ENCODE measurements at regions of chr9 and their contacts with region 1.

Region 1: GRCh38 chr9:129835021-129835871 is at the starts of genes C9orf78 and USP20:
- DNase-seq: peak; percentile 95 to 98 (median 98)
- H3K4me3 ChIP-seq: peak within 1 kb of the TSS; percentile 76 to 98
- H3K4me3 Mint-ChIP-seq: peak within 1 kb of the TSS; percentile 96 to 99 (median 98)
- H3K27ac ChIP-seq: peak within 1 kb of the TSS; percentile 92
- H3K27ac Mint-ChIP-seq: peak within 1 kb of the TSS; percentile 97 to 99 (median 99)
- H3K4me1 ChIP-seq: peaks cover 59% of the 10 kb centered on the region
- H3K4me1 Mint-ChIP-seq: peaks cover 40 to 69% (median 56%) of the 10 kb centered on the region in 4 donors
- H3K27me3 ChIP-seq: no peaks in the 10 kb centered on the region
- H3K27me3 Mint-ChIP-seq: no peaks in the 10 kb centered on the region
- total RNA-seq, gene C9orf78: 95.5 to 96.9 TPM
- total RNA-seq, gene USP20: 123 to 132 TPM

Region 2: DNA sequence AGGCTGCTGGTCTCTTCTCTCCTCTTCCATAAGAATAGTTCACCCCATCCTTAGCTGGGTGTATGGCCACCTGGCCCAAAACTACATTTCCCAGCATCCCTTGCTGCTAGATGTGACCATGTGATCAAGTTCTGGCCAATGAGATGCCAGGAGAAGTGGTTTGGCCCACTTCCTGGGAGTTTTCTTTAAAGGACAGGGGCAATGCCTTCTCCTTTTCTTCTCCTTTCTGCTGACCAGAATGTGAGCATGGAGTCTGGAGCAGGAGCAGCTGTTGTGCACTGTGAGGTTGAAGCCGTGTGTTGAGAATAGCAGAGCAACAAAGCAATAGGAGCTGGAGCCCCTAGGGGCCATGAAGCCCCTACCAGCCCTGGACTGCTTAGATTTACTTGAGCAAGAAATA is 251.1 kb before region 1 on chr9:
- CTCF ChIA-PET with region 1: no interaction called
- POLR2A ChIA-PET with region 1: no interaction called
- intact Hi-C with region 1: no loop called
- DNase-seq: peak; percentile 59 to 67 (median 62)
- H3K4me3 ChIP-seq: no peak overlapping the region
- H3K4me3 Mint-ChIP-seq: peak overlapping the region in 5 of 8 donors; percentile 19 to 70 (median 32)
- H3K27ac ChIP-seq: no peak overlapping the region
- H3K27ac Mint-ChIP-seq: peak overlapping the region; percentile 20 to 92 (median 83)
- H3K4me1 ChIP-seq: peaks cover 52% of the 10 kb centered on the region
- H3K4me1 Mint-ChIP-seq: peaks cover 26 to 77% (median 52%) of the 10 kb centered on the region in 4 donors
- H3K27me3 ChIP-seq: no peaks in the 10 kb centered on the region
- H3K27me3 Mint-ChIP-seq: no peaks in the 10 kb centered on the region

Region 3: GRCh38 chr9:129802851-129803675 is 32.2 kb before region 1 on chr9 and contains the start of gene TOR1B:
- CTCF ChIA-PET with region 1: interaction called, 5 read pairs
- POLR2A ChIA-PET with region 1: interaction called, 9 read pairs
- intact Hi-C with region 1: loop called (anchors 1 kb)
- DNase-seq: peak; percentile 93 to 96 (median 94)
- H3K4me3 ChIP-seq: peak within 1 kb of the TSS; percentile 77 to 78
- H3K4me3 Mint-ChIP-seq: peak within 1 kb of the TSS; percentile 91 to 96 (median 93)
- H3K27ac ChIP-seq: peak within 1 kb of the TSS; percentile 85
- H3K27ac Mint-ChIP-seq: peak within 1 kb of the TSS; percentile 88 to 97 (median 95)
- H3K4me1 ChIP-seq: peaks cover 27% of the 10 kb centered on the region
- H3K4me1 Mint-ChIP-seq: peaks cover 17 to 31% (median 23%) of the 10 kb centered on the region in 4 donors
- H3K27me3 ChIP-seq: no peaks in the 10 kb centered on the region
- H3K27me3 Mint-ChIP-seq: no peaks in the 10 kb centered on the region
- total RNA-seq, gene TOR1B: 29.5 to 33.0 TPM

Region 4: GRCh38 chr9:129823935-129824601 is 11.2 kb before region 1 on chr9 and contains the start of gene TOR1A:
- CTCF ChIA-PET with region 1: no interaction called
- POLR2A ChIA-PET with region 1: interaction called, 40 read pairs
- intact Hi-C with region 1: loop called (anchors 1 kb)
- DNase-seq: peak; percentile 89 to 95 (median 90)
- H3K4me3 ChIP-seq: peak within 1 kb of the TSS; percentile 24 to 73
- H3K4me3 Mint-ChIP-seq: peak within 1 kb of the TSS; percentile 84 to 91 (median 88)
- H3K27ac ChIP-seq: peak within 1 kb of the TSS; percentile 62
- H3K27ac Mint-ChIP-seq: peak within 1 kb of the TSS; percentile 73 to 95 (median 88)
- H3K4me1 ChIP-seq: peaks cover 8% of the 10 kb centered on the region
- H3K4me1 Mint-ChIP-seq: peaks cover 8 to 18% (median 13%) of the 10 kb centered on the region in 4 donors
- H3K27me3 ChIP-seq: no peaks in the 10 kb centered on the region
- H3K27me3 Mint-ChIP-seq: no peaks in the 10 kb centered on the region
- total RNA-seq, gene TOR1A: 39.8 to 41.9 TPM

Region 5: GRCh38 chr9:129863059-129863690 is 27.9 kb after region 1 on chr9:
- CTCF ChIA-PET with region 1: interaction called, 3 read pairs
- POLR2A ChIA-PET with region 1: interaction called, 181 read pairs
- intact Hi-C with region 1: no loop called
- DNase-seq: peak; percentile 57 to 87 (median 73)
- H3K4me3 ChIP-seq: peak overlapping the region in 1 of 2 donors; percentile 29
- H3K4me3 Mint-ChIP-seq: peak overlapping the region; percentile 34 to 88 (median 77)
- H3K27ac ChIP-seq: peak overlapping the region; percentile 43
- H3K27ac Mint-ChIP-seq: peak overlapping the region; percentile 85 to 98 (median 93)
- H3K4me1 ChIP-seq: peaks cover 83% of the 10 kb centered on the region
- H3K4me1 Mint-ChIP-seq: peaks cover 42 to 79% (median 64%) of the 10 kb centered on the region in 4 donors
- H3K27me3 ChIP-seq: no peaks in the 10 kb centered on the region
- H3K27me3 Mint-ChIP-seq: no peaks in the 10 kb centered on the region

Region 6: GRCh38 chr9:129868916-129869486 is 33.8 kb after region 1 on chr9:
- CTCF ChIA-PET with region 1: interaction called, 5 read pairs
- POLR2A ChIA-PET with region 1: interaction called, 181 read pairs
- intact Hi-C with region 1: loop called (anchors 1 kb)
- DNase-seq: peak; percentile 94 to 98 (median 96)
- H3K4me3 ChIP-seq: peak overlapping the region; percentile 12 to 51
- H3K4me3 Mint-ChIP-seq: peak overlapping the region; percentile 59 to 78 (median 69)
- H3K27ac ChIP-seq: peak overlapping the region; percentile 90
- H3K27ac Mint-ChIP-seq: peak overlapping the region; percentile 86 to 98 (median 94)
- H3K4me1 ChIP-seq: peaks cover 89% of the 10 kb centered on the region
- H3K4me1 Mint-ChIP-seq: peaks cover 46 to 93% (median 73%) of the 10 kb centered on the region in 4 donors
- H3K27me3 ChIP-seq: no peaks in the 10 kb centered on the region
- H3K27me3 Mint-ChIP-seq: no peaks in the 10 kb centered on the region

Region 7: GRCh38 chr9:129906298-129906697 is 71.1 kb after region 1 on chr9:
- CTCF ChIA-PET with region 1: no interaction called
- POLR2A ChIA-PET with region 1: no interaction called
- intact Hi-C with region 1: no loop called
- DNase-seq: no peak
- H3K4me3 ChIP-seq: no peak overlapping the region
- H3K4me3 Mint-ChIP-seq: no peak overlapping the region
- H3K27ac ChIP-seq: no peak overlapping the region
- H3K27ac Mint-ChIP-seq: peak overlapping the region in 4 of 7 donors; percentile 20 to 72 (median 46)
- H3K4me1 ChIP-seq: no peaks in the 10 kb centered on the region
- H3K4me1 Mint-ChIP-seq: peaks cover 17 to 36% (median 23%) of the 10 kb centered on the region in 4 donors
- H3K27me3 ChIP-seq: no peaks in the 10 kb centered on the region
- H3K27me3 Mint-ChIP-seq: no peaks in the 10 kb centered on the region

Region 8: GRCh38 chr9:130053504-130054324 is 218.5 kb after region 1 on chr9 and contains the start of gene GPR107:
- CTCF ChIA-PET with region 1: interaction called, 3 read pairs
- POLR2A ChIA-PET with region 1: interaction called, 3 read pairs
- intact Hi-C with region 1: loop called (anchors 2 kb)
- DNase-seq: peak; percentile 71 to 80 (median 79)
- H3K4me3 ChIP-seq: peak within 1 kb of the TSS; percentile 67 to 98
- H3K4me3 Mint-ChIP-seq: peak within 1 kb of the TSS; percentile 90 to 95 (median 95)
- H3K27ac ChIP-seq: peak within 1 kb of the TSS; percentile 95
- H3K27ac Mint-ChIP-seq: peak within 1 kb of the TSS; percentile 91 to 97 (median 95)
- H3K4me1 ChIP-seq: peaks cover 29% of the 10 kb centered on the region
- H3K4me1 Mint-ChIP-seq: peaks cover 18 to 38% (median 28%) of the 10 kb centered on the region in 4 donors
- H3K27me3 ChIP-seq: no peaks in the 10 kb centered on the region
- H3K27me3 Mint-ChIP-seq: no peaks in the 10 kb centered on the region
- total RNA-seq, gene GPR107: 23.8 to 24.4 TPM